Cardiac septum (tissue), 1 donor: ENCODE measurements at regions of chr4 and their contacts with region 1.

Region 1: DNA sequence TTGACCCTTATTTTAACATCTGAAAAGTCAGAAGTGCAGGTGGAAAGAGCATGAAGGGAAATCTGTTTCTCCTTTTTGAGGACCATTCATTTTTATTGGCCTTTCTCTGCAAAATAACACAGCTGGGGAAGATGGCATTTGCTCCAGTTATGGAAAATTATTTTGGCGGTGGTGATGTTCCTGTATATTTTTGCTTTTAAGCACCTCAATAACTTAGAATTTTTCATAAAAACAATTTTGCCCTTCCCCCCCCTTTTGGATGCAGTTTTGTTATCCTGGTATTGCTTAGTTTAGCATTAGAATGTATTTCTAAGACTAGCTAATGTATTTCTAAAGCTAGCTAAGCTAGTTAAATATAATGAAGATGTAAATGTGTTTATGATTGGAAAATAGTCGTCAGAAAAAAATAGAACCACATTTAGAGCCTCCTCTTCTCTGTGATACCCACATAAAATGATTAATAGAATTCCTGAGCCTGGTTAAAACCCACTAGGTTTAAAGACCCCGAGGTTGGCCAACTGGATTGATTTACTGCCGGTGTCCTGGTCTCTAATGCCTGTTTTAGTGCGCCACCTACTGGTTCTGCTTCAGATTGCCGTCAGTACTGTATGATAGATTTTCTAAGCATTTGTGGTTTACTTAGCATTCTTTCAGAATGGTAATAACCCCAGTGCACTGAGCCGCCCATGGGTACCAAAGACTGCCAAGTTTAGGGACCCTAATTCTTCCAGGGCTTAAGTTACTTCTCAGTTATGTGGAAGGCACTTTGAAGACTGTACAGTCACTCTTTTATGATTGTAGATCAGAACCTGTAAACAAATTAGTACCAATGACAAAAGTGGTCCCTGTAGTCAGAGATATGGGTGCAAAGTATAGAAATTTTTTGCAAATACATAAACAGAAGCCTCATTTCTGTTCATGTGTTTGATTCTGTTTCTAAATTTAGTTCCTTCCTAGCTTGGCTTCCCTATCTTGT is 11.4 kb downstream of the KLF3 start:
- DNase-seq: no peak

Region 2: DNA sequence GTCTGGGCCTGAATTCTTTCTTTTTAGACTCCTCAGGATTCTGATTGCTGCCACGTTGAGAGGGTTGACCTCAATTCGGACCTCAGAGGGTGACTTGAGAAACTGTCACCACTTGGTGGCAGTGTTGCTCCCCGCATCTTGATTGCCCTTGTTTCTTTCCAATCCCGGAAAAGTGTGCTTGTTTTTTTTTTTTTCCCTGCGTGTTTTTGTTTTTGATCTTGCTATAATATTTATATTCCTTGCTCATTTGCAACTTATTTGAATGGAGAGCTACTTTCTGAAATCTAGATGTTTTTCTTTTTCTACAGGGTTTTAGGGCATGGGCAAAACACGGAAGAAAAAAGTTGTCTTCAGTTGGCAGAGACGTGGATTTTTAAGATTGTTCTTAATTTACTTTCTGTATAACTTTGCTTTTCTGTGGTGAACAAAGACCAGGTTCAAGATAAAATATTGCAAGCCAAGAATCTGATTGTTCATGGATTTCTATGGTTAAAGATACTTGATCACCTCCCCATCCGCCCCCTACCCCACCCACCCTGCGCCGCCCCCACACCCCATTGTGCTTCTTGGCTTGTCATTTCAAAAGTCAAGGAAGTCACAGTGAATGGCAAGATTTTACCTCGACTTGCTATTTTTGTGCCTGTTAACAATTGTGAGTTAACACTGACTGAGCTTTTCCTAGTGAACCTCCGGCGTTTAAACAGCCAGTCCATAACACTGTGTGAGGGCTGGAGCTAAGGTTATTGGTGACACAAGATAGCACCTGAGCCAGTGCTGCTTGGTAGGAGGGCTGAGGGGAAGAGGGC is 613.1 kb before region 1 on chr4:
- intact Hi-C with region 1: loop called (anchors 2 kb)
- DNase-seq: no peak

Region 3: DNA sequence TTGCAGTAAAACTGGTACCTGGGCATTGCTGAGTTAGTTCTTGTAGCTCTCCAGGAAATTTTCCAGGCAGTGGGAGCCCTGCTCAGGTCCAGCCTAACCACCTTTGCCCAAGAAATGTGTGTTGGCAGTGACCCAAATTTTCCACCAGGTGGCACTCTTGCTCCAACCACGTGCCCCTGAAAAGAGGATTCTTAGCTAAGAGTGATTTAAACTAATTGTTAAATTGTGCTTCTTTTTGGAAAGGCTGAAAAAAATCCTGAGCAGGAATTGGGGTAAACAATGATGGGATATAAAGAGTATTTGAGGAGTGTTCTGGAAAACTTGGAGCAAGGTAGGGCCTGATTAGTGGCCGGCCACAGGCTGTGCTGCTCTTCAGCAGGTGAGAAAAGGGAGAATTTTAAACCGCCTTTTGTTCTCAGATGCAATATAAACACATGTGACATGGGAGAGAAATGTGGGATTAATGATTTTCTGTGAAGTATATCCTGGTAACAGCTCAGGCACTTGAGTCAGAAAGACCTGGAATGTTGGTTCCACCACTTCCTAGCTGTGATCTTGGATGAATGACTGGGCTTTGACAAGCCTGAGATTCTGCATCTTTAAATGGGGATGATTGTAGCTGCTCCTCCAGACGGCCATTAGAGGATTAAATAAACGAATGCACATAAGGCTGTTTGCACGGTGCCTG is 495.6 kb before region 1 on chr4:
- intact Hi-C with region 1: loop called (anchors 1 kb)
- DNase-seq: peak; percentile 87

Region 4: GRCh38 chr4:38190717-38191178 is 484.7 kb before region 1 on chr4:
- intact Hi-C with region 1: loop called (anchors 2 kb)
- DNase-seq: peak; percentile 84

Region 5: GRCh38 chr4:38381788-38382187 is 293.6 kb before region 1 on chr4:
- intact Hi-C with region 1: loop called (anchors 5 kb)
- DNase-seq: no peak